Activated CD8-positive, alpha-beta T cell treated with anti-CD3 and anti-CD28 coated beads, Interleukin-2, amount 10 ng/mL, durations not matched to agents 7 days and 5 days (primary cell): ENCODE measurements at regions of chr10 and their contacts with region 1.

Region 1: GRCh38 chr10:62637249-62638061 is 167.1 kb upstream of the ADO start:
- DNase-seq: peak; percentile 82
- ATAC-seq: peak; percentile 96
- H3K4me3 Mint-ChIP-seq: no peak overlapping the region
- H3K27ac Mint-ChIP-seq: no peak overlapping the region
- H3K4me1 Mint-ChIP-seq: peaks cover 16% of the 10 kb centered on the region
- H3K27me3 Mint-ChIP-seq: no peaks in the 10 kb centered on the region

Region 2: DNA sequence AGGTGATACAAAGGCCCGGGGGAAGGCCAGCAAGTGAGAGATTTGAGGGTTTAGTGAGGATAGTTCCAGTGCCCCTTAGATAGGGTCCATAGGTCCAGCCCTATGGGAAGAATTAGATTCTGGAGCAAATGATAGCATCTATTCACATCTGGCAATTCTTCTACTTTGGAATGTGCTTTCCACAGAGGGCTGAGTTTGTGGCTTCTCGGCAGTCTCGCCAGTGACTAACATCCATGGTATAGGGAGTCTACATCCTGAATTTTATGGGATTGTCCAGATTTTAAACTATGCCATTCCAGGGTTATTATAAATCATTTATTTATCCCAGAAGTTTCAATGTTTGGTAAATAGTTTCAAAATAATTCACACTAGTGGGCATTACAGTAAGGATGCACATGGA is 40.2 kb before region 1 on chr10:
- CTCF ChIA-PET with region 1: no interaction called
- POLR2A ChIA-PET with region 1: no interaction called
- DNase-seq: no peak
- ATAC-seq: no peak
- H3K4me3 Mint-ChIP-seq: no peak overlapping the region
- H3K27ac Mint-ChIP-seq: no peak overlapping the region
- H3K4me1 Mint-ChIP-seq: peaks cover 3% of the 10 kb centered on the region
- H3K27me3 Mint-ChIP-seq: peaks cover 8% of the 10 kb centered on the region

Region 3: DNA sequence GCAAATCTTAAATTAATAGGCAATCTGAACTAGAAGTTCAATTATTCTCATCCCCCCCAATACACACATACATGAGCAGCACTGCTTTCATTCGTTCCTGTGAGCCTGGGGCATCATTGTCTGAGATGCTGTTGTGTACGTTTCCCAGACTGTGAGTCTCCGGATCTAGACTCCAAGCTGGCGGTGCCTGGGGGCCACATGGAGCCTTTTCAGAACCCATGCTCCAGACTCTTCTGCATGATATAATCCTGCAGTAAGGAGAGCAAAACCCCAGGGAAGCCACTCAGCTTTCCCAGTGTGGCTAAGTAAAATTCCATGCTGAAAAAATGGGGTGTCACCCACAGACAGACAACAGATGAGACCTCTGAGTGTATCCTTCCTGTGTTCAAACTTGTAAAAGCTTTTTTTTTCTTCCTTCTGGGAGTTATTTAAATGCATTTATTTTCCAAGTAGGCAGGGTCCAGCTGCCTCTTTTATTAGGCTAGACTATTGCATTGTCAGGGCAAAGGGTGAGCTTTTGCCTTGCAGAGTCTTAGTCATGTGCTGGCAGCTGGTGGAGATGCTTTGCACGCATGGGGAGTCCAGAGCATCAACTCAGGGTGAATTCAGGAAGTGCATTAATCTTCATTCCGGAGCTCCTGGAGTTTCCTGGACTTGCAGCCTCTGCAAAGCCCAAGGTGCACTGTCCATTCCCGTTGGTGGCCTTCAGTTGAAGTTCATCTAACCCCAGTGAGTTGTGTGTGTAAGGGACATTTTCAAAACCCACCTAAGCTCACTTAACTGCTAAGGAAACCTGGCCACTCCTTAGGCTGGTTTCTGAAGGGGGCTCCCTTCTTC is 18.7 kb before region 1 on chr10:
- CTCF ChIA-PET with region 1: interaction called, 16 read pairs
- POLR2A ChIA-PET with region 1: interaction called, 3 read pairs
- DNase-seq: no peak
- ATAC-seq: no peak
- H3K4me3 Mint-ChIP-seq: no peak overlapping the region
- H3K27ac Mint-ChIP-seq: no peak overlapping the region
- H3K4me1 Mint-ChIP-seq: peaks cover 33% of the 10 kb centered on the region
- H3K27me3 Mint-ChIP-seq: peaks cover 2% of the 10 kb centered on the region

Region 4: GRCh38 chr10:62647375-62648092 is 10.1 kb after region 1 on chr10:
- CTCF ChIA-PET with region 1: interaction called, 22 read pairs
- POLR2A ChIA-PET with region 1: no interaction called
- DNase-seq: no peak
- ATAC-seq: peak; percentile 55
- H3K4me3 Mint-ChIP-seq: peak overlapping the region; percentile 7
- H3K27ac Mint-ChIP-seq: peak overlapping the region; percentile 23
- H3K4me1 Mint-ChIP-seq: peaks cover 21% of the 10 kb centered on the region
- H3K27me3 Mint-ChIP-seq: no peaks in the 10 kb centered on the region

Region 5: DNA sequence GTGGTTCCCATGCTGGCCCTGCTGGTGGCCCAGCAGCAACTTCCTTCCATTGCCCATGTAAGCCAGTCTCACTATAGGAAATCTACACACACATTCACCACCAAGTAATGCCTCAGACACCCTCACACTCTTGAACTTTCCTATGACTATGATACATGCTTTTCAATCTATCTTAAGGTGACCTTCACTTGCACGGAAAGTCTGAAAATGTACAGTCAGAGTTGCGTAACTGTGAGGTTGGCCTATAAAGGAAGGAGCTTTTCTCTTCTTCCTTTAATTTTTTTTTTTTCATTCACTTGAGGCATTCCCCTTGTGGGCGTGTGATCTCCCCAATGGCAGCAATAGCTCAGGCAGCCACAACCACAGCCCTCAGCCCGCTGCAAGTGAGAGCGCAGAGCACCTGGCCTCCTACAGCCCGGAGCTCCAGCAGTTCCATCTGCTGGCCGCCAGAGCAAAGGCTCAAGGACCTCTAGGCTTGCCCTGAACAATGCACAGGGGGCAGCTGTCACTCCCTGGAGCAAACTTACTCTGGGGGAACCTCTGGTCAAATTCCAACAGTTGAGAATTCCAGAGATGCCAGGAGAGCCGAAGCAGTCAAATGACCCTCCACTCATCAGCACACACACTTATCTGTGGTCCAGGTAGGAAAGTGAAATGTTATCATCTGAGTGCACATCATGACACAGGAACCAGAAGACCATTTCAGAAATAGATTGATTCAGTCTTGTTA is 43.9 kb after region 1 on chr10:
- CTCF ChIA-PET with region 1: interaction called, 14 read pairs
- POLR2A ChIA-PET with region 1: interaction called, 14 read pairs
- DNase-seq: peak; percentile 79
- ATAC-seq: peak; percentile 92
- H3K4me3 Mint-ChIP-seq: no peak overlapping the region
- H3K27ac Mint-ChIP-seq: peak overlapping the region; percentile 1
- H3K4me1 Mint-ChIP-seq: peaks cover 26% of the 10 kb centered on the region
- H3K27me3 Mint-ChIP-seq: no peaks in the 10 kb centered on the region

Region 6: GRCh38 chr10:62732841-62733653 is 95.6 kb after region 1 on chr10:
- CTCF ChIA-PET with region 1: interaction called, 26 read pairs
- POLR2A ChIA-PET with region 1: interaction called, 31 read pairs
- DNase-seq: peak; percentile 80
- ATAC-seq: peak; percentile 89
- H3K4me3 Mint-ChIP-seq: no peak overlapping the region
- H3K27ac Mint-ChIP-seq: no peak overlapping the region
- H3K4me1 Mint-ChIP-seq: peaks cover 16% of the 10 kb centered on the region
- H3K27me3 Mint-ChIP-seq: peaks cover 5% of the 10 kb centered on the region